Caco-2 (cell line): ENCODE measurements at regions of chr1 and their contacts with region 1.

Region 1: GRCh38 chr1:67500413-67500959 is 70.3 kb upstream of the SERBP1 start:
- DNase-seq: peak; percentile 83 to 87
- H3K4me3 ChIP-seq: no peak overlapping the region
- H3K4me3 Mint-ChIP-seq: peak overlapping the region; percentile 16
- H3K27ac Mint-ChIP-seq: no peak overlapping the region
- H3K4me1 ChIP-seq: no peaks in the 10 kb centered on the region; the same call in 1 of the 2 replicates
- H3K4me1 Mint-ChIP-seq: no peaks in the 10 kb centered on the region
- H3K27me3 ChIP-seq: no peaks in the 10 kb centered on the region
- H3K27me3 Mint-ChIP-seq: no peaks in the 10 kb centered on the region
- CTCF ChIP-seq: peak; percentile 66 to 76

Region 2: GRCh38 chr1:67214420-67215174 is 285.9 kb before region 1 on chr1:
- CTCF ChIA-PET with region 1: interaction called, 12 read pairs
- POLR2A ChIA-PET with region 1: no interaction called
- intact Hi-C with region 1: loop called (anchors 1 kb)
- DNase-seq: peak in 1 of 2 experiments; percentile 39
- H3K4me3 ChIP-seq: no peak overlapping the region
- H3K4me3 Mint-ChIP-seq: no peak overlapping the region
- H3K27ac Mint-ChIP-seq: no peak overlapping the region
- H3K4me1 ChIP-seq: no peaks in the 10 kb centered on the region
- H3K4me1 Mint-ChIP-seq: no peaks in the 10 kb centered on the region
- H3K27me3 ChIP-seq: no peaks in the 10 kb centered on the region
- H3K27me3 Mint-ChIP-seq: no peaks in the 10 kb centered on the region
- CTCF ChIP-seq: peak; percentile 40 to 44

Region 3: DNA sequence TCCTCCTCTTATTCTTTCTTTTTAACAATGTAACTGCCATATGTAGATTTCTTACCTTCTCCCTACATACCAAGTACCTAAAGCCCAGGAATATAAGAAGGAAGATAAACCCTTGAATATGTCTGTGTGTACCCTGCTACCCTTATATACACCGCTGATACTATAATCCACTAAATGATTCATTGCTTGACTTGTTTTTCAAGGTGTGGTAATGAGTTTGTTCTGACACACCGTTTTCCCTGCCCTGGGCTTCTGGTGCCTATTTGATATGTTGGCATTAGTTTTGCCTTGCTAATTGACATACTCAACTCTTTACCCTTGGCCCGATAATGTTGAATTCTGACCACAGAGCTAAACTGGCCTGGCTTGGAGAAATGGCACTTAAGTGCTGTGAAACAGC is 269.9 kb before region 1 on chr1:
- CTCF ChIA-PET with region 1: interaction called, 11 read pairs
- POLR2A ChIA-PET with region 1: no interaction called
- intact Hi-C with region 1: loop called (anchors 1 kb)
- DNase-seq: no peak
- H3K4me3 ChIP-seq: no peak overlapping the region
- H3K4me3 Mint-ChIP-seq: no peak overlapping the region
- H3K27ac Mint-ChIP-seq: no peak overlapping the region
- H3K4me1 ChIP-seq: no peaks in the 10 kb centered on the region
- H3K4me1 Mint-ChIP-seq: no peaks in the 10 kb centered on the region
- H3K27me3 ChIP-seq: no peaks in the 10 kb centered on the region
- H3K27me3 Mint-ChIP-seq: no peaks in the 10 kb centered on the region
- CTCF ChIP-seq: no peak

Region 4: DNA sequence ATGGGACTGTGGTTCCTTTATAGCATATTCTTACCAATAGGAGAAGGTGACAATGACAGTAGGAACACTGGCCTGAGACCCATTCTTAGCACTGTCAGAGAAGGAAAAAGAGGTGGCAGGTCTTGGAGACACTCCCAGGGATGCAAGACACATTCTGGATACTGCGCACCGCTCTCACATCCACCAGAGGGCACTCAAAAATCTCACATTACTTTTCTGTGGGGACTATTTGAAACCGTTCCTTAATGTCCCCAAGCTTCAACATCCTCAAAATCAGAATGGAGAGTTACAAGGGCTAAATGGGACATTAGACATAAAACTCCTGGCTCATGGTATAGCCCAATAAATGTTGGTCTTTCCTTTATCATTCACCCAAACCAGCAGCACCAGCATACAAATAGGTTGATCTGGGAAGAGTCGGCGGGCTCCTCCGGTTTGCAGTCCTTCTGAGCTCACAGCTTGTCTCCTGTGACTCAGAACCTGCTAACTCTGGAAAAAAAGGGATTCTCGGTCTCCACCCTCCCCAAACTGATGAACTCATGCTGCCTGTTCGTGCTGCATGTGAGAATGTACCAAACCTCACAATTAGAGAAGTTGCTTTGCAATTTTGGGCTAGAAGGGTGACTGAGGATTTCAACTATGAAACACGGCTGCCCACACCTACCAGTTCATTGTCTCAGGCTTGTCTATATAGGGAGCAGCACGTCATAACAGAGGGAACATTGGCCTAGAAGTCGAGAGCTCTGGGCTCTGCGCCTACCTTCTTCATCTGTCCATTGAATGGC is 152.6 kb before region 1 on chr1:
- CTCF ChIA-PET with region 1: interaction called, 8 read pairs
- POLR2A ChIA-PET with region 1: no interaction called
- intact Hi-C with region 1: loop called (anchors 1 kb)
- DNase-seq: peak; percentile 36 to 38
- H3K4me3 ChIP-seq: no peak overlapping the region
- H3K4me3 Mint-ChIP-seq: no peak overlapping the region
- H3K27ac Mint-ChIP-seq: no peak overlapping the region
- H3K4me1 ChIP-seq: no peaks in the 10 kb centered on the region
- H3K4me1 Mint-ChIP-seq: no peaks in the 10 kb centered on the region
- H3K27me3 ChIP-seq: no peaks in the 10 kb centered on the region
- H3K27me3 Mint-ChIP-seq: no peaks in the 10 kb centered on the region
- CTCF ChIP-seq: peak; percentile 44 to 68

Region 5: GRCh38 chr1:67418839-67419586 is 81.5 kb before region 1 on chr1:
- CTCF ChIA-PET with region 1: no interaction called
- POLR2A ChIA-PET with region 1: no interaction called
- intact Hi-C with region 1: no loop called
- DNase-seq: no peak
- H3K4me3 ChIP-seq: no peak overlapping the region
- H3K4me3 Mint-ChIP-seq: no peak overlapping the region
- H3K27ac Mint-ChIP-seq: no peak overlapping the region
- H3K4me1 ChIP-seq: no peaks in the 10 kb centered on the region
- H3K4me1 Mint-ChIP-seq: no peaks in the 10 kb centered on the region
- H3K27me3 ChIP-seq: no peaks in the 10 kb centered on the region
- H3K27me3 Mint-ChIP-seq: no peaks in the 10 kb centered on the region
- CTCF ChIP-seq: no peak

Region 6: DNA sequence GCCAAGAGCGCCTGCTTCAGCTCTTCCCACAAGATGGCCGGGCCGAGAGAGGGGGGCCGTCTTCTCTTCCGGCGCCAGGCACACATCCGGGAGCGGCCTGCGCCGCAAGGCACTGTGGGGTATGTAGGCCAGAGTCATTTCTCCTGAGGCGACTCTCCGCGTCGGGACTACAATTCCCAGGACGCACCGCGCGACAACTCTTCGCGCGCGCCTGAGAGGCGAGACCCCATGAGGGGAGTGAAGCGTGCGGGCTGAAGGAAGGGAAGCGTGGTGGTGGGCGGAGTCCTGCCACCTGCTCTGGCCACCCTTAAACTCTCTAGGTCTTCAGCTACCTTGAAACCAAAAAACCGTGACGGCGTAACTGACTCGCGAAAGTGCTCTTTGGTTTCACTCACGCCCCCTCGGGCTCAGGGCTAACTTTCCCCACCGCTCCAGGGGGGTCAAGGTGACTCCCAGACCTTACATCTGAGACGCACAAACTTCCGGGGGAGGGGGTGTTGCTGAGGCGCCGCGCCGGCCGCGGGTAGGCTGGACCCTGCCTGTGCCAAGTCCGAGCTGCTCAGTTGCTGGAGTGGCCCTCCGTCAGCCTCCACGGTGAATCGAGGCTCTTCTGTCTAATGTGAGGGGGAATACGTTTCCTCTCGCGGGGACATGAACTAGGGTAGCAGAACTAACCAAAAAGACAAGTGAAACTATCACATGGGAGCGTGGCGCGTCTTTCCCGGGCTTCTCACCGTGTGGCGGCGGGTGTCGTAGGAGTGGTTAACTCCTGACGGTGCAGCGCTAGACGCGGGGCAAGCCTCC is 69.9 kb before region 1 on chr1 and contains the start of gene SERBP1:
- CTCF ChIA-PET with region 1: interaction called, 4 read pairs
- POLR2A ChIA-PET with region 1: no interaction called
- intact Hi-C with region 1: loop called (anchors 2 kb)
- DNase-seq: peak; percentile 93 to 94
- H3K4me3 ChIP-seq: peak within 1 kb of the TSS; percentile 83
- H3K4me3 Mint-ChIP-seq: peak within 1 kb of the TSS; percentile 100
- H3K27ac Mint-ChIP-seq: peak within 1 kb of the TSS; percentile 99
- H3K4me1 ChIP-seq: no peaks in the 10 kb centered on the region; the same call in 1 of the 2 replicates
- H3K4me1 Mint-ChIP-seq: peaks cover 8% of the 10 kb centered on the region
- H3K27me3 ChIP-seq: no peaks in the 10 kb centered on the region
- H3K27me3 Mint-ChIP-seq: no peaks in the 10 kb centered on the region
- CTCF ChIP-seq: no peak
- total RNA-seq, gene SERBP1: 182 and 192 TPM in 2 replicates

Region 7: DNA sequence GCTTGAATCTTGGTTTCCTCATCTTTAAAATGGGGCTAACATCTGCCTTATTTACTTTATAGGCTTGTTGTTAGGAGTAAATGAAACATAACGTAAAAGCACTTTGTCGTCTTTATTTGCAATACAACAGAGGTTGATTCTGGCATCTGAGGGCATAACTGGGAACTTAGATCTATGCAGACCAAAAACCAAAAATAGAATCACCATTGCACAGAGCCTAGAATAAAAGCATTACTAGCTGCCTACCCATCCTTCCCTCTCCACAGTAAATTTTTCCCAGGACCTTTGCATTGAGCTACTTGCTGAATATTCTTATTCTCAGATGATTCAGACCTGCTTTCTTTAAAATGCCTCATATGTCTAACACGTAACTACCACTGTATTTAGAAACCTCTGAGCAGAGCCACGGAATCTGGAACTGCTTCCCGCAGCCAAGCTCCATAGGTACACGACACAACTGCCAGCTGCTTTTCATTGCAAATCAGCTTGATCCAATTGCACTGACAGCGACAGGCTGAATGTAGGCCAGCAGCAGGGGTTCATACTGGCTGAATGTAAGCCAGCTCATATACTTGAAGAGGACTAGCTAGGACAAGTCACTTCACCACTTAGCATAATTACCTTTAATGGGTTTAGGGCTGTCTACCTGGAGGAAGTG is 37.1 kb before region 1 on chr1:
- CTCF ChIA-PET with region 1: no interaction called
- POLR2A ChIA-PET with region 1: no interaction called
- intact Hi-C with region 1: no loop called
- DNase-seq: no peak
- H3K4me3 ChIP-seq: no peak overlapping the region
- H3K4me3 Mint-ChIP-seq: no peak overlapping the region
- H3K27ac Mint-ChIP-seq: no peak overlapping the region
- H3K4me1 ChIP-seq: no peaks in the 10 kb centered on the region
- H3K4me1 Mint-ChIP-seq: peaks cover 6% of the 10 kb centered on the region
- H3K27me3 ChIP-seq: no peaks in the 10 kb centered on the region
- H3K27me3 Mint-ChIP-seq: no peaks in the 10 kb centered on the region
- CTCF ChIP-seq: no peak

Region 8: DNA sequence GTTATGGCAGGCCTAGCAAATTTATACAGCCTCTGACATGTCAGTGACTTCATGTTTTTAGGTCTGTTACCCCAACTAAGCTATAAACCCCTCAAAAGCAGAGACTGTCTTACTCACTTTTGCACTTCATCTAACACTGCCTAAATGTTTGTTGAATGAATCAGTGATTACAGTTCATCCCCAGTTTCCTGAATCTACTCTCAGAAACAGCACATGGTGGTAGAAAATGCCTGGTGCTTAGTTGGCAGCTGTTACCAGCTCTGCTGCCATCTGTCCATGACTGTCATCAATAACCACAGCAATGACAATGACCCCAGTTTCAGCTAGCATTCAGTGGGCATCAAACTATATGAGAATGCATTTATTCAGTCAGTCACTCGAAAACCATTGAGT is 40.2 kb after region 1 on chr1:
- CTCF ChIA-PET with region 1: no interaction called
- POLR2A ChIA-PET with region 1: no interaction called
- intact Hi-C with region 1: no loop called
- DNase-seq: no peak
- H3K4me3 ChIP-seq: no peak overlapping the region
- H3K4me3 Mint-ChIP-seq: no peak overlapping the region
- H3K27ac Mint-ChIP-seq: no peak overlapping the region
- H3K4me1 ChIP-seq: peaks cover 12% of the 10 kb centered on the region
- H3K4me1 Mint-ChIP-seq: peaks cover 19% of the 10 kb centered on the region
- H3K27me3 ChIP-seq: no peaks in the 10 kb centered on the region
- H3K27me3 Mint-ChIP-seq: no peaks in the 10 kb centered on the region
- CTCF ChIP-seq: no peak